ENCODE measurements at regions of chr2 and their contacts with region 1.

Region 1: DNA sequence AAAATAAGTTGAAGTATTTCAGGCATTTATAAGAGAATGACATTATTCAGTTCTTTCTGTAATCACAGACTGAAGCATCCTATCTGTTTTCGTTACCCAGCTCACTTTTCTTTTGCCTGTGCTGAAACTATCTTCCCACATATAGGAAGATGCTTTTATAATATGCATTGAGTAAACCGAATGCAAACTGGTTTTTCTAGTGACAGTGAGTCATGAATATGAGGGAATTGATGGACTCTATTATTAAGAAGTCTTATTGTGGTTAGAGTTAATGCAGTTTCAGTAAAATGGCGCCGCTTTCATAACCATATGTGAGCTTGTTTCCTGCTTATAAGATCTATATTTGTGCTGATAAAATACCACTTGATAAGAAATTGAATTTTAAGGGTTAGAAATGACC is 59.2 kb downstream of the ACVR2A start:
- DNase-seq: no peak
- ATAC-seq: no peak
- H3K4me3 ChIP-seq: no peak overlapping the region
- H3K27ac ChIP-seq: no peak overlapping the region
- H3K4me1 ChIP-seq: no peaks in the 10 kb centered on the region
- H3K27me3 ChIP-seq: no peaks in the 10 kb centered on the region
- CTCF ChIP-seq: no peak
- POLR2A ChIP-seq: no peak

Region 2: GRCh38 chr2:147045113-147045512 is 858.9 kb before region 1 on chr2:
- intact Hi-C with region 1: loop called in 2 of 10 experiments (anchors 2 to 10 kb)
- DNase-seq: peak in 1 of 5 donors; percentile 9
- ATAC-seq: peak in 1 of 4 donors; percentile 24
- H3K4me3 ChIP-seq: no peak overlapping the region
- H3K27ac ChIP-seq: no peak overlapping the region
- H3K4me1 ChIP-seq: no peaks in the 10 kb centered on the region
- H3K27me3 ChIP-seq: no peaks in the 10 kb centered on the region
- CTCF ChIP-seq: peak; percentile 32 to 69 (median 53)
- POLR2A ChIP-seq: no peak